Sciatic nerve (tissue), 2 donors: ENCODE measurements at regions of chr6 and their contacts with region 1.

Region 1: GRCh38 chr6:36302227-36302976 is 32.5 kb downstream of the PNPLA1 start:
- DNase-seq: peak; percentile 94
- ATAC-seq: peak; percentile 84

Region 2: GRCh38 chr6:36360241-36361054 is 58.0 kb after region 1 on chr6:
- intact Hi-C with region 1: loop called (anchors 5 kb)
- DNase-seq: peak; percentile 90
- ATAC-seq: peak; percentile 92